ENCODE measurements at regions of chr18 and their contacts with region 1.

Region 1: GRCh38 chr18:50281295-50281971 is at the start of gene MBD1:
- DNase-seq: peak; percentile 96
- H3K4me3 Mint-ChIP-seq: peak within 1 kb of the TSS; percentile 88
- H3K27ac Mint-ChIP-seq: peak within 1 kb of the TSS; percentile 89
- H3K4me1 Mint-ChIP-seq: peaks cover 74% of the 10 kb centered on the region
- H3K27me3 Mint-ChIP-seq: no peaks in the 10 kb centered on the region
- total RNA-seq, gene MBD1: 103 to 106 TPM

Region 2: DNA sequence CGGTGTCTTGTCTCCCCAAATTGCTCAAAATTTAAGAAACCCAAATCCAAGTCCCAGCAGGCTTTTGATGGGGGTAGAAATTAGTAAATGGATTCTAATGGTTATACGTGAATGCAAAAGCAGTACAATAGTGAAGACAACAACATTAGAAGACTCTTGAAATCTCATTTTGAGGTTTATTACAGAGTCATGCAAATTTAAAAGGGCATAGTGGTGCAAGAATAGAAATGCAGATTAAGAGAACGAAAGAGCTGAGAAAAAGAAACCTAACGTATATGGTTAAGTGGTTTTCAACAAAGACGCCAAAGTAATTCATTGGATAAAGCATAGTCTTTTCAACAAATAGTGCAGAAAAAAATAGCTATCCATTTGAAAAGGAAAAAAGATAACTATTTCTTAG is 39.3 kb after region 1 on chr18:
- CTCF ChIA-PET with region 1: interaction called, 3 read pairs
- POLR2A ChIA-PET with region 1: interaction called, 14 read pairs
- DNase-seq: no peak
- H3K4me3 Mint-ChIP-seq: peak overlapping the region; percentile 55
- H3K27ac Mint-ChIP-seq: peak overlapping the region; percentile 73
- H3K4me1 Mint-ChIP-seq: peaks cover 25% of the 10 kb centered on the region
- H3K27me3 Mint-ChIP-seq: peaks cover 5% of the 10 kb centered on the region